HepG2 (cell line): ENCODE measurements at regions of chr4 and their contacts with region 1.

Region 1: DNA sequence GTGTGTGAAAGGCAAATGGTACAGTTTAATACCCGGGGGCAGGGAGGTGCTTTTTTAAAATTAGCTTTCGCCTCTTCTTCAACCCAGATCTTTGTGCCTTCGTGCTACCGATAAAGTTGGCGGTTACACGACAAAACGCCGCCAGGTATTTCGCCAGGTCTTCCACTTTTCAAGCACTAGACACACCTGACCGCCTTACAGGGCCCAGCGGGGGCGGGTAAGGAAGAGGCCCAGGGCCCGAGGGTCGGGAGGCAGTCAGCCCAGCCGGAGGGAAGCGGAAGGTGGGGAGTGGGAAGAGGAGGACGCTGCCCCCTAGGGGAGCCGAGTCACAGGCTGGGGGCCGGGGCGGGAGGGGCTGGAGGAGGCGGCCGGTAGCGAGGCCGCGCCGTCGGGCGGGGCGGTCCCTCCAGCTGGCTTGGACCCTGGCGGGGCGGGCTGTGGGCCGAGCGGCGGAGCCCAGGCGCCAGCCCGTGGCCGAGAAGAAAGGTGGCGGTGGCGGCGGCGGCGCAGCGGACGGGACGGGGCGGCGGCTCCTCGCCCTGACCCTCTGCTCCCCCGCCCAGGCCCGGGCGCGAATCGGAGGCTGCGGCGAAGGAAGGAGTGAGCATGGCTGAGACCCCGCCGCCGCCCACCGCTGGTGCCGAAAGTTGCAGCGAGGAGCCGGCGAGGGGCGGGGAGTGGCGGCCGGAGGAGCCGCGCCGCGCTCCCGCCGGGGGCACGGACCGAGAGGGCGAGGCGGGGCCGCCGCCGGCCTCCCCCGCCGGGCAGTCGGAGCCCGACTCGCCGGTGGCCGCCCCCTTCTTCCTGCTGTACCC is 16.2 kb downstream of the UTP3 start:
- DNase-seq: peak; percentile 67
- ATAC-seq: peak; percentile 85
- H3K4me3 ChIP-seq: peak overlapping the region; percentile 72 to 88 (median 80)
- H3K27ac ChIP-seq: peak overlapping the region; percentile 91
- H3K4me1 ChIP-seq: peaks cover 42% of the 10 kb centered on the region
- H3K27me3 ChIP-seq: no peaks in the 10 kb centered on the region; a peak in 1 of 5 replicates
- CTCF ChIP-seq: peak; percentile 85
- EP300 ChIP-seq: no peak
- POLR2A ChIP-seq: peak; percentile 56 to 75; a peak in 3 of 4 replicates
- RAD21 ChIP-seq: peak; percentile 12; the same call in 1 of the 2 replicates

Region 2: GRCh38 chr4:70734168-70734954 is 29.8 kb after region 1 on chr4:
- CTCF ChIA-PET with region 1: no interaction called
- POLR2A ChIA-PET with region 1: interaction called, 5 read pairs
- in situ Hi-C with region 1: no loop called
- intact Hi-C with region 1: loop called (anchors 2 kb)
- DNase-seq: peak; percentile 12
- ATAC-seq: peak; percentile 90
- H3K4me3 ChIP-seq: peak overlapping the region; percentile 14 to 52 (median 17); a peak in 4 of 6 replicates
- H3K27ac ChIP-seq: peak overlapping the region; percentile 53
- H3K4me1 ChIP-seq: peaks cover 31% of the 10 kb centered on the region
- H3K27me3 ChIP-seq: no peaks in the 10 kb centered on the region
- CTCF ChIP-seq: no peak
- EP300 ChIP-seq: no peak
- POLR2A ChIP-seq: no peak
- RAD21 ChIP-seq: no peak

Region 3: DNA sequence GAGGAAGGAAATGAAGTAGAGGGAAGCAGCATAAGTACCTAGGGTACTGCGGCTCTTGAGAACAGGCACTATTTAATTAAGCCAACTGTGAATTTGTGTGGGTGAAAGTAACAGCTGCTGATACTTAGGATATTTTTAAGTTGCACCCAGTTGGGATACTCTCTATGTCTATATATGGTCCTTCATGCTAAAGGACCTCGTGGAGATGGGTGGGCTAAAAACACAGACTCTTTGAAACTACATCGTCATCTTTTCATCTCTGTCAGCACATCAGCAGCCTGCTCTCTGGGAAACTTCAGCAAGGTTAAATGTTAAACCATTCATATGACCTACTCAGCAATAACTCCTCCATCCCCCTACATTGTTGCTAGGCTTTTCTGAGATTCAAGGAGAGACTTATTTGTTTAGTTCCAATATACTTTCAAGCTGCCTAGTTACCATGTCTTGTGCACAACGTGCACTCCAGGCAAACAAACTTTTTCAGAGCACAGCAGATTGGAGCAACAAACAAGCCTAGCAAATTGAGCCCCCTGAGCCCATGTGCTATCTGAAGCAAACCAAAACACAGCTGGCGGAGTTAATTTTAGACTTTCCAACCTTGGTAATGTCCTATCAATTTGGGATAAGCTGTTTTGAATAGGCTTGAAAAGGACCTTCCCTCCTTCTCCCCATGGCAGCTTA is 191.4 kb after region 1 on chr4:
- CTCF ChIA-PET with region 1: no interaction called
- POLR2A ChIA-PET with region 1: no interaction called
- in situ Hi-C with region 1: no loop called
- intact Hi-C with region 1: no loop called
- DNase-seq: no peak
- ATAC-seq: peak; percentile 74
- H3K4me3 ChIP-seq: no peak overlapping the region
- H3K27ac ChIP-seq: no peak overlapping the region
- H3K4me1 ChIP-seq: peaks cover 16% of the 10 kb centered on the region
- H3K27me3 ChIP-seq: no peaks in the 10 kb centered on the region
- CTCF ChIP-seq: no peak
- EP300 ChIP-seq: no peak
- POLR2A ChIP-seq: no peak
- RAD21 ChIP-seq: no peak

Region 4: DNA sequence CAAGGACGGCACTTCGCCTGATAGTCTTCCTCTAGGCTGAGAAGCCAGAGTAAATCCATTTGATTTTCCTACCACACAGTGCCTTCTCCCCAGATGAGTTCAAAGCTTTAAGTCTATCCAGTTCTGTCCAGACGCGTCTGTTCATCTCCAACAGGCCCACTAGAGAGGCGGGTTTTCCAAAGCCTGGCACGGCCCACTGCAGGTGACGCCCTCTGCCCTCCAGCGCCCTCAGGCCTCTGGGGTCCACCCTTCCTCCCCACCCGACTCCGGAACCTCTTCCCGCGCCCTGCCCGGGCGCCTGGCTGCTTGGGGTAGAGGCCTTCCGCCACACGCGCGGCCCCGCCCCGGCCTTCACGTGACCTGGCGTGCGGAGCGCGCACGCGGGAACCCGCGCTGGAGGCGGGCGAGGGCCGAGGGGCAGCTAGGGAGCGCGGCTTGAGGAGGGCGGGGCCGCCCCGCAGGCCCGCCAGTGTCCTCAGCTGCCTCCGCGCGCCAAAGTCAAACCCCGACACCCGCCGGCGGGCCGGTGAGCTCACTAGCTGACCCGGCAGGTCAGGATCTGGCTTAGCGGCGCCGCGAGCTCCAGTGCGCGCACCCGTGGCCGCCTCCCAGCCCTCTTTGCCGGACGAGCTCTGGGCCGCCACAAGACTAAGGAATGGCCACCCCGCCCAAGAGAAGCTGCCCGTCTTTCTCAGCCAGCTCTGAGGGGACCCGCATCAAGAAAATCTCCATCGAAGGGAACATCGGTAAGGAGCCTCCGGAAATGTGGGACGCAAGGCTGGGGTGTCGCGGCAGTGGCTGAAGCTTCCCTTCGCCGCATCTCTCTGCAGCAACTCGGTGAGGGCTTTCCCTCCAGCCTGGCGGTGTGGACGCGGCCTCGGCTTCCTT is 288.9 kb after region 1 on chr4 and contains the start of gene DCK:
- CTCF ChIA-PET with region 1: no interaction called
- POLR2A ChIA-PET with region 1: no interaction called
- in situ Hi-C with region 1: no loop called
- intact Hi-C with region 1: loop called (anchors 10 kb)
- DNase-seq: peak; percentile 85
- ATAC-seq: peak; percentile 93
- H3K4me3 ChIP-seq: peak within 1 kb of the TSS; percentile 67 to 92 (median 89)
- H3K27ac ChIP-seq: peak within 1 kb of the TSS; percentile 83
- H3K4me1 ChIP-seq: peaks cover 43% of the 10 kb centered on the region
- H3K27me3 ChIP-seq: no peaks in the 10 kb centered on the region
- CTCF ChIP-seq: peak; percentile 25; the same call in 1 of the 2 replicates
- EP300 ChIP-seq: peak; percentile 8 to 13; a peak in 2 of 4 replicates
- POLR2A ChIP-seq: peak; percentile 81 to 82
- RAD21 ChIP-seq: peak; percentile 57; the same call in 1 of the 2 replicates
- total RNA-seq, gene DCK: 21.8 and 33.5 TPM in 2 replicates